ENCODE measurements at regions of chr17 and their contacts with region 1.

Region 1: DNA sequence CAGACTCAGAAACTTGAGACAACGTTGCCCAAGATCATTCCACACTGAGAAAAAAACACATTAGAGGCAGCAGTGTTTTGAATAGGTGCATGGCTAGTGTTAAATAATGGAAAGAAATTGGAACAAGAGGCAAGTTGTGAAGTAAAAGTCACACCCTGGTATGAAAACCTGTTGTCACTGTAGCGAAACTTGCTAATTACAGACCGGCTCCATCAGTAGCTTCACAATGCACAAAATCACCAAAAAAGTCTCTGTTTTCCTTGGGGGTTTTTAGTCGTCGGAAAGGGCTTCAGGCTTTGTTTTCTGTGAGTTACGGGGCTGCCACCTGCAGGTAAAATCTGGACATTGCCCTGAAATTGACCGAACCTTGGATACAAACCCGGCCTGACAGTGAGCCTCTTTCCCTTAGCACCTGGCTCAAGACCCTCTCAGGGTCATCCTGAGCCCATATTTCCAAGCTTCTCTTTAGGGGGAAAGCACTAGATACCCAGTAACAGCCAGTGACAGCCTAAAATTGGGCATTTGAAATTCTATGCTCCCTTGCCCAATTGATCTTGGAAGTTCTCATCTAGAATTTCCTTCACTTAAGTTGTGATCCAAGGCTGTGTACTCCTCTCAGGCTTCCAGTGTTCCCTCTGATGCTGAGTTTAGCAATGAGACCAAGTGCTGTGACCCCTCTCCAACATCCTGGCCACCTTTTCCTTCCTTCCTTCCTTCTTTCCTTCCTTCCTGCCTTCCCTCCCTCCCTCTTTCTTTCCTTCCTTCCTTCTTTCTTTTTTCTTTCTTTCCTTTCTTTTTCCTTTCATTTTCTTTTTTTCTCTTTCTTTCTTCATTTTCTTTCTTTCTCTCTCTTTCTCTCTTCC is 7.2 kb upstream of the GRB2 start:
- DNase-seq: no peak
- H3K4me3 ChIP-seq: no peak overlapping the region
- H3K27ac ChIP-seq: no peak overlapping the region
- H3K4me1 ChIP-seq: peaks cover 8% of the 10 kb centered on the region
- H3K27me3 ChIP-seq: no peaks in the 10 kb centered on the region
- CTCF ChIP-seq: peak; percentile 72 to 83 (median 75)
- POLR2A ChIP-seq: no peak

Region 2: GRCh38 chr17:75219815-75220214 is 192.9 kb before region 1 on chr17:
- intact Hi-C with region 1: no loop called
- DNase-seq: no peak
- H3K4me3 ChIP-seq: no peak overlapping the region
- H3K27ac ChIP-seq: no peak overlapping the region
- H3K4me1 ChIP-seq: no peaks in the 10 kb centered on the region
- H3K27me3 ChIP-seq: no peaks in the 10 kb centered on the region
- CTCF ChIP-seq: no peak
- POLR2A ChIP-seq: no peak

Region 3: GRCh38 chr17:75319904-75320691 is 92.6 kb before region 1 on chr17:
- intact Hi-C with region 1: loop called (anchors 5 kb)
- DNase-seq: no peak
- H3K4me3 ChIP-seq: no peak overlapping the region
- H3K27ac ChIP-seq: no peak overlapping the region
- H3K4me1 ChIP-seq: no peaks in the 10 kb centered on the region
- H3K27me3 ChIP-seq: no peaks in the 10 kb centered on the region
- CTCF ChIP-seq: no peak
- POLR2A ChIP-seq: no peak

Region 4: GRCh38 chr17:75459590-75460267 is 47.0 kb after region 1 on chr17:
- intact Hi-C with region 1: no loop called
- DNase-seq: no peak
- H3K4me3 ChIP-seq: no peak overlapping the region
- H3K27ac ChIP-seq: no peak overlapping the region
- H3K4me1 ChIP-seq: peaks cover 31% of the 10 kb centered on the region
- H3K27me3 ChIP-seq: no peaks in the 10 kb centered on the region
- CTCF ChIP-seq: no peak
- POLR2A ChIP-seq: no peak